Activated naive CD4-positive, alpha-beta T cell treated with anti-CD3 and anti-CD28 coated beads for 36 hours (primary cell): ENCODE measurements at regions of chr14 and their contacts with region 1.

Region 1: GRCh38 chr14:38089123-38089522 is 118.6 kb upstream of the SSTR1 start:
- DNase-seq: no peak
- H3K4me3 Mint-ChIP-seq: peak overlapping the region; percentile 43
- H3K27ac Mint-ChIP-seq: no peak overlapping the region
- H3K4me1 Mint-ChIP-seq: peaks cover 35% of the 10 kb centered on the region
- H3K27me3 Mint-ChIP-seq: no peaks in the 10 kb centered on the region

Region 2: DNA sequence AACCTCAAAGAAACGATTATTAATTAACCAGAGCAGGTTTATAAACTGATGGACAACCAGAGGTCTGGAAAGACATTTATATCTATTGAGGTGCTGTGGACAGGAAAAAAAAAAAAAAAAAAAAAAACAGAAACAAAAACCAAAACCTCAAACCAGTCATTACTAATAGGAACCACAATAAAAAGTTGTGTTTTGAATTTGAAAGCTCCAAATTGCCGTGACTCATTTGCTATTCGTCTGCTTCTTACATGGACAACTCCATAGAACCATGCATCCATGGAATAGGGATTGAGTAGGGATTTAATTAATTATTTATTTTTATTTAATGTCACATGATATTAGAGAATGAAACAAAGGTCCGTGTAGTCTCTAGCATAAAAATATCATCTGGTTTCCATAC is 15.5 kb before region 1 on chr14:
- CTCF ChIA-PET with region 1: interaction called, 5 read pairs
- intact Hi-C with region 1: loop called (anchors 2 kb)
- DNase-seq: no peak
- H3K4me3 Mint-ChIP-seq: no peak overlapping the region
- H3K27ac Mint-ChIP-seq: no peak overlapping the region
- H3K4me1 Mint-ChIP-seq: peaks cover 66% of the 10 kb centered on the region
- H3K27me3 Mint-ChIP-seq: no peaks in the 10 kb centered on the region